Activated naive CD4-positive, alpha-beta T cell treated with anti-CD3 and anti-CD28 coated beads for 36 hours (primary cell): ENCODE measurements at regions of chr1 and their contacts with region 1.

Region 1: GRCh38 chr1:66929999-66930822 is 5.4 kb downstream of the MIER1 start:
- DNase-seq: peak; percentile 92
- H3K4me3 Mint-ChIP-seq: peak overlapping the region; percentile 84
- H3K27ac Mint-ChIP-seq: peak overlapping the region; percentile 92
- H3K4me1 Mint-ChIP-seq: peaks cover 51% of the 10 kb centered on the region
- H3K27me3 Mint-ChIP-seq: no peaks in the 10 kb centered on the region

Region 2: DNA sequence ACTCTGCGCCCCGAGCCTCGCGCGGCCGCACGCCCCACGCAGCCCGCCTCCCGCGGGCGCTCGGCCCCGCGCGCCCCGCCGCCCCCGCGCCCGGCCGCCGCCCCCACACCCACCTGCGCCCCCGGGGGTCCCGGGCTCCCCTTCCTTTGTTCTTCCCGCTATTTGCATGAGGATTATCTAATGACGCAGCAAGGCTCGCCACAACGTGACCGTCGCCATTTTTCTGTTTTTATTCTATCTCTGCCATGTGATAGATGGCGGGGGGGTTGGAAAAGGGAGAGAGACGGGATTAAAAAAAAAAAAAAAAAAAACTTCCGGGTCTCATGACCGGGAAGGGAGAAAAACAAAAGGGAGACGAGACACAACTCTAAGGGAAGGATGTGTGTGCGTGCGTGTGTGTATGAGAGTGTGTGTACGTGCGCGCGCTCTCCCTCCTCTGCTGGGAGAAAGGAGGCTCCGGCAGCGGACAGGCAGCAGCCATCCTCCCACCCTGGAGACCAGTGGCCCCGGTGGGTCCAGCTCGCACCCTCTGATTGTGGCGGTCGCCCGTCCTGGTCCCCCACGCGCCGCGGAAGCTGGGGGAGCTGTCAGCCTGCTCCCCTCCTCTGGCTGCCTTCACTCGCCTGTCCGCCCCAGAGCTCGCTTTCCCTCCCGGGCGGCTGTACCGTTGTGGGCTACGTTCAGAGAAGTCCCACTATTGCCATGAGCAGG is 1862.6 kb before region 1 on chr1:
- CTCF ChIA-PET with region 1: no interaction called
- intact Hi-C with region 1: loop called (anchors 10 kb)
- DNase-seq: peak; percentile 71
- H3K4me3 Mint-ChIP-seq: peak overlapping the region; percentile 87
- H3K27ac Mint-ChIP-seq: peak overlapping the region; percentile 95
- H3K4me1 Mint-ChIP-seq: peaks cover 51% of the 10 kb centered on the region
- H3K27me3 Mint-ChIP-seq: no peaks in the 10 kb centered on the region

Region 3: DNA sequence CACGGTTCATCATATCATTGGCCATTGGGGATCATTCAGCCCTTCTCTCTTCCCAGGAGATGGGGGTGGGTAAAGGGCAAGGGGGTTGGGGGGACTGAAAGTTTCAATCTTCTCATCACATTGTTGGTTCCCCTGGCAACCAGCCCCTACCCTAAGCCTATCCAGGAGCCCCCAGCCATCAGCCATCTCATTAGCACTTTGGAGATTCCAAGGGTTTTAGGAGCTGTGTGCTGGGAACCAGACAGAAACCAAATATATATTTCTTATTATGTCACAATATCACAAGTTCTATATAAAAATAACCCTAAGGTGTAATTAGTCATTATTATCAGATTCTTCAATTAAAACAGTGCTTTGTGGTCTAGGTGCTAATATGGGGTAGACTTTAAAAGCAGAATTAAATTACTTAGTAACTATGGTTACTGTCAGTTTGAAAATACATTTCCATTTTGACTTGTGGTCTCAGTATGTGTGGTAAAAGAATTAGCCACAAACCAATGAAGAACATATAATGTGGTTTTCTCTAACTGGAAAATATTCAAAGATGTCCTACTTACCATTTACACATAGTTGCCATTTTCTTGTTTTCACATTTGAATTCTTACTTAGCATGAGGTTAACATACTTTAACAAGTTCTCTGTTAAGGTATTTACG is 264.1 kb after region 1 on chr1:
- CTCF ChIA-PET with region 1: no interaction called
- intact Hi-C with region 1: loop called (anchors 1 kb)
- DNase-seq: no peak
- H3K4me3 Mint-ChIP-seq: no peak overlapping the region
- H3K27ac Mint-ChIP-seq: no peak overlapping the region
- H3K4me1 Mint-ChIP-seq: peaks cover 39% of the 10 kb centered on the region
- H3K27me3 Mint-ChIP-seq: no peaks in the 10 kb centered on the region